Mammary epithelial cell (primary cell): ENCODE measurements at regions of chr3 and their contacts with region 1.

Region 1: GRCh38 chr3:13135251-13135810 is 62.1 kb upstream of the IQSEC1 start:
- DNase-seq: no peak
- H3K4me3 ChIP-seq: no peak overlapping the region
- H3K27ac ChIP-seq: no peak overlapping the region
- H3K4me1 ChIP-seq: no peaks in the 10 kb centered on the region
- H3K27me3 ChIP-seq: no peaks in the 10 kb centered on the region
- CTCF ChIP-seq: no peak

Region 2: DNA sequence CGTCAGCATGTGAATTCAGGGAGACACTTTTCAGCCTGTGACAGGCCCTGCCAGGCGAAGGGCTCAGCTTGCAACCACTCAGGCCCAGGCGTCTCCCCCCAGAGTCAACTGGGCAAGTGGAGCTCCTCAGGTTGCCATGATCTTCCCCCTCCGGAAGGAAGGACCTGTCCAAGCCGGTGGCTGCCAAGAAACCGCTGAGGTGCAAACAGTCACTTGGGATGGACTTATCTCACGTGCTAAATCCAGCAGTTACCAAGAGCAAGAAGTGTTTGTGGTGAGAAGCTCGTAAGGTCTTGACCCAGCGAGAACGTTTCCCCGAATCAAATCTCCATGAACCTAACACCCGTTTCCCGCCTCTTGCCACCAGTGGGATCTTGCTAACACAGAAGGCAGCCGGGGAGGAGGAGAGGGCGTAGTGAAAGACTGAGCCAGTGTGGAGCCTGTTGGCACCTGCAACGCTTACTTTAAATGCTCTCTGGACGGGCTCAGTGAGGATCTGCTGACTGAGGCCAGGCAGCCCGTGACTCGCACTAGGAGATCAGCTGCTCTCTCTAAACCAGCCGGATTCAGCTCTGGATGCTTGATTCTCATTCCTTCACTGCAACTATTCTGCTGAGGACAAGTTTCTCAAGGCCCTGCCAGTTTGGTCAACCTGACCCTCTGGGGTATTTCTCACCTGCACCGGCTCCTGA is 101.1 kb before region 1 on chr3:
- CTCF ChIA-PET with region 1: no interaction called
- dilution Hi-C with region 1: loop called (anchors 5 kb)
- in situ Hi-C with region 1: no loop called
- intact Hi-C with region 1: no loop called
- DNase-seq: no peak
- H3K4me3 ChIP-seq: no peak overlapping the region
- H3K27ac ChIP-seq: no peak overlapping the region
- H3K4me1 ChIP-seq: no peaks in the 10 kb centered on the region
- H3K27me3 ChIP-seq: peaks cover 3% of the 10 kb centered on the region
- CTCF ChIP-seq: no peak

Region 3: GRCh38 chr3:13245615-13245978 is 110.3 kb after region 1 on chr3:
- CTCF ChIA-PET with region 1: no interaction called
- dilution Hi-C with region 1: loop called (anchors 5 kb)
- in situ Hi-C with region 1: no loop called
- intact Hi-C with region 1: no loop called
- DNase-seq: no peak
- H3K4me3 ChIP-seq: no peak overlapping the region
- H3K27ac ChIP-seq: no peak overlapping the region
- H3K4me1 ChIP-seq: peaks cover 10% of the 10 kb centered on the region
- H3K27me3 ChIP-seq: no peaks in the 10 kb centered on the region
- CTCF ChIP-seq: no peak

Region 4: DNA sequence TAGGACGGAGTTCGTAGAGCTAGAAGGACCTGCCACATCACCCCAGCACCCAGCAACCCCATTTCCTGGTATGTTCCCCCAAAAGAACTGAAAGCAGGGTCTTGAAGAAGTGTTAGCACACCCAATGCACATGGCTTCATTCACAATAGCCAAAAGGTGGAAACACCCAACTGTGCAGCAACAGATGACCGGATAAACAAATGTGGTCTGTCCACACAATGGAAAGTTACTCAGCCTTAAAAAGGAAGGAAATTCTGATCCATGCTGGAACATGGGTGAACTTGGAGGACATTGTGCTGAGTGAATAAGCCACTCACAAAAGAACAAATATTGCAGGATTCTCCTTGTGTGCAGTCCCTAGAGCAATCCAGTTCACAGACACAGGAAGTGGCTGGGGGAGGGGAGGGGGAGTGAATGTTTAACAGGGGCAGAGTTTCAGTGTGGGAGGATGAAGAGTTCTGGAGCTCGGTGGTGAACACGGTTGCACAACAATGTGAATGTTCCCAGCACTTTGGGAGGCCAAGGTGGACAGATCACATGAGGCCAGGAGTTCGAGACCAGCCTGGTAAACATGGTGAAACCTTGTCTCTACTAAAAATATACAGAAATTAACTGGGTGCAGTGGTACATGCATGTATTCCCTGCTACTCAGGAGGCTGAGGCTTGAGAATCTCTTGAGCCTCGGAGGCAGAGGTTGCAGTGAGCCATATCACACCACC is 127.3 kb after region 1 on chr3:
- CTCF ChIA-PET with region 1: no interaction called
- dilution Hi-C with region 1: no loop called
- in situ Hi-C with region 1: no loop called
- intact Hi-C with region 1: no loop called
- DNase-seq: no peak
- H3K4me3 ChIP-seq: no peak overlapping the region
- H3K27ac ChIP-seq: no peak overlapping the region
- H3K4me1 ChIP-seq: no peaks in the 10 kb centered on the region
- H3K27me3 ChIP-seq: peaks cover 5% of the 10 kb centered on the region
- CTCF ChIP-seq: no peak

Region 5: GRCh38 chr3:13687517-13687943 is 552.2 kb after region 1 on chr3:
- CTCF ChIA-PET with region 1: no interaction called
- dilution Hi-C with region 1: no loop called
- in situ Hi-C with region 1: no loop called
- intact Hi-C with region 1: no loop called
- DNase-seq: no peak
- H3K4me3 ChIP-seq: no peak overlapping the region
- H3K27ac ChIP-seq: no peak overlapping the region
- H3K4me1 ChIP-seq: no peaks in the 10 kb centered on the region
- H3K27me3 ChIP-seq: no peaks in the 10 kb centered on the region
- CTCF ChIP-seq: no peak